CD4-positive, alpha-beta memory T cell (primary cell): ENCODE measurements at regions of chr13 and their contacts with region 1.

Region 1: DNA sequence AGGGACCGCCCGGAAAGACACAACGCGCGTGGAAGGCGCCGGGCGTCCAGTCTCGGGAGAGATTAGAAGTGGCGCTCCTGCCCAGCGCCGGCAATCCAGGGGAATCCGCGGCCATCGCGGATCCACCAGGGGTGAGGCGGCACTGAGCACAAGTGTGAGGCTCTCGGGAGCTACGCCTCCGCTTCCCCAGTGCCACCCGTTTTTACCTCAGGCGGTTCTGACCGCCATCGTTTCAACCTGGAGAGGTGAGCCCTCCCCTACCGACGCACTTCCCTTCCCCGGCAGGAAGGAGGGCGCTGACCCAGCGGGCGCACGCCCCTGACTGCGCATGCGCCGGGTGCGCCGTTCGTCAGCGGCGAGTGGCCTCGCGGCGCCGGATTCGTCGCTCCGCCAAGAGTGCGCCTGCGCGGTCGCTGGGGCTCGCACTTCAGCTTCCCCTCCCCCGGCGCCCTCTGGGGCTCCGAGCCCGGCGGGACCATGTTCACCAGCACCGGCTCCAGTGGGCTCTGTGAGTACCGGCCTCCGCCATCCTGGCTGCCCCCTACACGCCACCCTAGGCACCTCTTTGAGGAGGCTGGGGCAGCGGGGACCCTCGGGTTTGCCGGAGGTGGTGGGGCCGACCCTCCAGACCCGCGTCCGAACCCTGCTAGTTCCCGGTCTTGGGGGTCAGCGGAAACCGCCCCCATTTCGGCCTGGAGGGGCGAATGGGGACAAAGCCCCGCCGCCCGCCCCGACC is at the start of gene UBAC2:
- DNase-seq: peak; percentile 95 to 99 (median 98)
- H3K4me3 ChIP-seq: peak within 1 kb of the TSS; percentile 79 to 89
- H3K4me3 Mint-ChIP-seq: peak within 1 kb of the TSS; percentile 93 to 100 (median 99)
- H3K27ac ChIP-seq: peak within 1 kb of the TSS; percentile 97
- H3K27ac Mint-ChIP-seq: peak within 1 kb of the TSS; percentile 85 to 98 (median 97)
- H3K4me1 ChIP-seq: peaks cover 61% of the 10 kb centered on the region
- H3K4me1 Mint-ChIP-seq: peaks cover 45 to 69% (median 55%) of the 10 kb centered on the region in 4 donors
- H3K27me3 ChIP-seq: no peaks in the 10 kb centered on the region
- H3K27me3 Mint-ChIP-seq: no peaks in the 10 kb centered on the region
- total RNA-seq, gene UBAC2: 88.4 to 89.0 TPM

Region 2: GRCh38 chr13:99185606-99186005 is 15.0 kb before region 1 on chr13:
- CTCF ChIA-PET with region 1: interaction called, 8 read pairs
- POLR2A ChIA-PET with region 1: interaction called, 10 read pairs
- intact Hi-C with region 1: no loop called
- DNase-seq: no peak
- H3K4me3 ChIP-seq: no peak overlapping the region
- H3K4me3 Mint-ChIP-seq: no peak overlapping the region
- H3K27ac ChIP-seq: no peak overlapping the region
- H3K27ac Mint-ChIP-seq: no peak overlapping the region
- H3K4me1 ChIP-seq: peaks cover 2% of the 10 kb centered on the region
- H3K4me1 Mint-ChIP-seq: peaks cover 3 to 15% (median 4%) of the 10 kb centered on the region in 4 donors
- H3K27me3 ChIP-seq: no peaks in the 10 kb centered on the region
- H3K27me3 Mint-ChIP-seq: no peaks in the 10 kb centered on the region

Region 3: DNA sequence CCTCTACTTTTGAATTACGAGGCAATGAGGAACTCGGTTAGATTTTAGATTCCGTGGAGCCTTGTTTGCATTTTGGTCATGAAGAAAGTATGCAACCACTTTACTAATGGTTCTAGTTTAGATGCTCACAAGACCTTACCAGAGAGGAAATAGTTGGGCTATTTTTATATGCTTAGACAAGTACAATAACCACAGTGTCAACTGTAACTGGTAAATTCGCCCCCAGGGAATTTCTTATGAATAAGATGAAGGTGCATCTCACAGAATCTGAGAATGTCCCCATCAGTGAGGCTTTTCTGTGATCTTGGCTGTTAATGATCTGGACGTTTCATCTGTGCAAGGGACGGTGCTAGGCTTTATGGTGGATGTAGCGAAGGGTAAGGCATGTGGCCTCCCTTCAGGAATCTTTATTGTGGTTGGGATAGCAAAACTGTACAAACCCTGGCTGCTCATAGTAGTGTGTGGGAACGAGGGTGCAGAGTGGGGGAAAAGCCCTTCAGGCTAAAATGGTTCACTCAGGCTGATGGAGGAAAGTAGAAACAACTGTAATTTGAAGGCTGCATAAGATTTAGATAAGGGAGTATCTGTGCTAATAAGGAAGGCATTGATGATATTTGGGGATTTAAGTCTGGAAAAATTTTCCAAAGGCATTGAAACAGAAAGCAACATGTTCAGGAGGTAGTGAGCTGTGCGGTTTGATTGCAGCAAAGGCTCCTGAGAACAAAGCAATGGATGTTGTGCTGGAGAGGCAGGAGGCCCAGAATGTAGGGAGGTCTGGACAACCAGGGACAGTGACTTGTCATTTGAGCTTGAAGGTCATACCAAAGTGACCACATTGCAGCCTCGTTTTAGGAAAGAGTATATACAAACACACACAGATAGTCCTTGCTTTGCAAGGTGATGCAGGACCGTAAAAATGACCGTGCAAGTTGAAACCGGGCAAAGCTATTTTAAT is 28.4 kb after region 1 on chr13:
- CTCF ChIA-PET with region 1: interaction called, 8 read pairs
- POLR2A ChIA-PET with region 1: interaction called, 14 read pairs
- intact Hi-C with region 1: no loop called
- DNase-seq: no peak
- H3K4me3 ChIP-seq: no peak overlapping the region
- H3K4me3 Mint-ChIP-seq: peak overlapping the region; percentile 33 to 91 (median 78)
- H3K27ac ChIP-seq: peak overlapping the region; percentile 52
- H3K27ac Mint-ChIP-seq: peak overlapping the region; percentile 63 to 92 (median 88)
- H3K4me1 ChIP-seq: peaks cover 86% of the 10 kb centered on the region
- H3K4me1 Mint-ChIP-seq: peaks cover 56 to 75% (median 65%) of the 10 kb centered on the region in 4 donors
- H3K27me3 ChIP-seq: no peaks in the 10 kb centered on the region
- H3K27me3 Mint-ChIP-seq: no peaks in the 10 kb centered on the region

Region 4: DNA sequence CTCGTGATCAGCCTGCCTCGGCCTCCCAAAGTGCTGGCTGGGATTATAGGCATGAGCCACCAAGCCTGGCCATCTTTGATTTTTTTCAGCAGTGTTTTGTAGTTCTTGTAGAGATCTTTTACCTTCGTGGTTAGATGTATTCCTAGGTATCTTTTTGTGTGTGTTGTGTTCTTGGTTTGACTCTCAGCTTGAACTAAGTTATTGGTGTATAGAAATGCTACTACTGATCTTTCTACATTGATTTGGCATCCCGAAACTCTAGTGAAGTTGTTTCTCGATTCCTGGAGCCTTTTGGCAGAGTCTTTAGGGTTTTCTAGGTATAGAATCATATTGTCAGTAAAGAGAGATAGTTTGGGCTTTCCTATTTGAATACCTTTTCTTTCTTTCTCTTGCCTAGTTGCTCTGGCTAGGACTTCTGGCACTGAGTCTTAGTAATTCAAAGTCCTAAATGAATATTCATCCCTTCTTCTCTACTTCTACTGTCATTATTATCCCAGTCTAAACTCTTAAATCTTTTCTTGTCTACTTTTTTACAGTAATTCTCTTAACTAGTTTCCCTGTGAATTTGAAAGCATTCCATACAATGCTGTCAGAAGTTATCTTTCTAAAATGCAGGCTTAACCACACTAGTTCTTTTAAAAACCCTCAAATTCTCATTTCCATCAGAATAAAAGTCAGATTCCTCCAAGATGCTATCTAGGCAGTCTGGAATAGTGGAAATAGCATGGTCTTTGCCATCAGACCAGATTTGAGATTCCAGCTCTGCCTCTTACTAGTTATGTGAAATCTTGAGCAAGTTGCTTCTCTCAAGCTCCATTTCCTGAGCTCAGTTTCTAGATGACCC is 50.6 kb after region 1 on chr13:
- CTCF ChIA-PET with region 1: interaction called, 77 read pairs
- POLR2A ChIA-PET with region 1: interaction called, 152 read pairs
- intact Hi-C with region 1: no loop called
- DNase-seq: no peak
- H3K4me3 ChIP-seq: no peak overlapping the region
- H3K4me3 Mint-ChIP-seq: peak overlapping the region in 5 of 8 donors; percentile 9 to 71 (median 36)
- H3K27ac ChIP-seq: no peak overlapping the region
- H3K27ac Mint-ChIP-seq: peak overlapping the region; percentile 63 to 87 (median 77)
- H3K4me1 ChIP-seq: peaks cover 37% of the 10 kb centered on the region
- H3K4me1 Mint-ChIP-seq: peaks cover 41 to 64% (median 50%) of the 10 kb centered on the region in 4 donors
- H3K27me3 ChIP-seq: no peaks in the 10 kb centered on the region
- H3K27me3 Mint-ChIP-seq: no peaks in the 10 kb centered on the region

Region 5: DNA sequence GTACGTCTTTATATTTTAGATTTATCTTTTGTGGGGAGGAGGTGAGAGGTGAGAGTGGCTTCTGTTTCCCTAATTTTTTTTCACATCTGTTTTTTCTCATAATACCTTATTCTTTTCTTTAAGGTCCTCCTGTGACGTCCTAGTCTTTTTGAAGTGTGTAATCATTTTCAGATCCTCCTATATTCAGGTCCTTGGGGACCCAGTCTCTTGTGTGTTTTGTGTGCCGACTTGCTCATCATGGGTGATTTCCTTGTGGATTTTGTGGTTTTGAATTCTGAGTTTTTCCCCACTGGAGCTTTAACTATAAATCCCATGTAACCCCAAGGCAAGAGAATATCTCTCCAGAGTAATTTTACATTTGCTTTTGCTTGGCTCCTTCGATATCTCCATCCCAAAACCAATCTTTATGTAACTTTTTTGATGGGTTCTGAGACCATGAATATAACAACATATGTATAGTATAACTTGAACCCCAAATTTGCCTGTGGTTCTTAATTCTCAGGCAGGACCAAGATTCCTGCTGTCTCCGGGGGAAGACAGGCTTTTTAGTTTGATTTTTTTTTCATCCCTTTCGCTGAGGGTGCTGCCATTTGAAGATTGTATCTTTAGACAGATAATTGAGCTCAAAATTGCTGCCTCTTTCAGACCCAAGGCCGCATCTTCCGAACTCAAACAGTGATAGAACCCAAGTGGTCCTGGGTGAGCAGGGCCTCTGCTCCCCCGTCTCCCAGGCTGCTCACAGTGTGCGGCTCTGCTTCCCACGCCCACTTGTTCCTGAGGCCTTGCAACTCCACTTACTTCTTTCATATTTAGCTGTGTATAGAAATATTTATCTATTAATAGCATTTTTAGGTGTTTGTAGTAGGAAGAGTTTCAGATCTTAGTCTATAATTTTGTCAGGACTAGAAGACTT is 165.7 kb after region 1 on chr13:
- CTCF ChIA-PET with region 1: no interaction called
- POLR2A ChIA-PET with region 1: interaction called, 7 read pairs
- intact Hi-C with region 1: loop called (anchors 5 kb)
- DNase-seq: no peak
- H3K4me3 ChIP-seq: peak overlapping the region in 1 of 2 donors; percentile 22
- H3K4me3 Mint-ChIP-seq: peak overlapping the region; percentile 41 to 93 (median 78)
- H3K27ac ChIP-seq: peak overlapping the region; percentile 70
- H3K27ac Mint-ChIP-seq: peak overlapping the region; percentile 96 to 98 (median 97)
- H3K4me1 ChIP-seq: peaks cover 98% of the 10 kb centered on the region
- H3K4me1 Mint-ChIP-seq: peaks cover 73 to 98% (median 85%) of the 10 kb centered on the region in 4 donors
- H3K27me3 ChIP-seq: no peaks in the 10 kb centered on the region
- H3K27me3 Mint-ChIP-seq: no peaks in the 10 kb centered on the region

Region 6: DNA sequence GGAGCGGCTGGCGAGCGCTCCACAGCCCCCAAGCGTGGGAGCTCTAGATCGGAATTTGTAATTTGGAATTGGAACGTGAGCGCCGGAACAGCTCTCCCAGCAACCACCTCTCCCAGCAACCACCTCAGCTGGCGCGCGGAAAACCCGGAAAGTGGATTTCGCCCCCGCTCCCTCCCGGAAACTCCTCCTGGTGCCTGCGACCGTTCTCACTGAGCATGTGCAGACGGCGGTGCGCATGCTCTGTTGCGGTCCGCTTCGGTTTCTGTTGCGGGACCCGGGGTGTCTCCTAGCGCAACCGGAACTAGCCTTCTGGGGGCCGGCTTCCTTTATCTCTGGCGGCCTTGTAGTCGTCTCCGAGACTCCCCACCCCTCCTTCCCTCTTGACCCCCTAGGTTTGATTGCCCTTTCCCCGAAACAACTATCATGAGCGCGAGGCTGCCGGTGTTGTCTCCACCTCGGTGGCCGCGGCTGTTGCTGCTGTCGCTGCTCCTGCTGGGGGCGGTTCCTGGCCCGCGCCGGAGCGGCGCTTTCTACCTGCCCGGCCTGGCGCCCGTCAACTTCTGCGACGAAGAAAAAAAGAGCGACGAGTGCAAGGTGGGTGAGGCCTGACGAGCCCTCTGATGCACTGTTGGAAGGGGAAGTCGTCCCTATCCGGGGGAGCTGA is 300.7 kb after region 1 on chr13 and contains the start of gene TM9SF2:
- CTCF ChIA-PET with region 1: no interaction called
- POLR2A ChIA-PET with region 1: interaction called, 4 read pairs
- intact Hi-C with region 1: loop called (anchors 1 kb)
- DNase-seq: peak; percentile 96 to 98 (median 97)
- H3K4me3 ChIP-seq: peak within 1 kb of the TSS; percentile 57 to 72
- H3K4me3 Mint-ChIP-seq: peak within 1 kb of the TSS; percentile 89 to 99 (median 98)
- H3K27ac ChIP-seq: peak within 1 kb of the TSS; percentile 86
- H3K27ac Mint-ChIP-seq: peak within 1 kb of the TSS; percentile 98 to 99 (median 98)
- H3K4me1 ChIP-seq: peaks cover 86% of the 10 kb centered on the region
- H3K4me1 Mint-ChIP-seq: peaks cover 49 to 94% (median 71%) of the 10 kb centered on the region in 4 donors
- H3K27me3 ChIP-seq: no peaks in the 10 kb centered on the region
- H3K27me3 Mint-ChIP-seq: no peaks in the 10 kb centered on the region
- total RNA-seq, gene TM9SF2: 60.0 to 64.2 TPM